CD4-positive, alpha-beta T cell (primary cell): ENCODE measurements at regions of chr1 and their contacts with region 1.

Region 1: GRCh38 chr1:178802873-178803272 is 68.0 kb downstream of the ANGPTL1 start:
- DNase-seq: no peak
- ATAC-seq: no peak
- H3K4me3 ChIP-seq: no peak overlapping the region
- H3K4me3 Mint-ChIP-seq: no peak overlapping the region
- H3K27ac ChIP-seq: no peak overlapping the region
- H3K27ac Mint-ChIP-seq: no peak overlapping the region
- H3K4me1 ChIP-seq: no peaks in the 10 kb centered on the region
- H3K4me1 Mint-ChIP-seq: no peaks in the 10 kb centered on the region
- H3K27me3 ChIP-seq: no peaks in the 10 kb centered on the region
- H3K27me3 Mint-ChIP-seq: no peaks in the 10 kb centered on the region
- CTCF ChIP-seq: no peak

Region 2: DNA sequence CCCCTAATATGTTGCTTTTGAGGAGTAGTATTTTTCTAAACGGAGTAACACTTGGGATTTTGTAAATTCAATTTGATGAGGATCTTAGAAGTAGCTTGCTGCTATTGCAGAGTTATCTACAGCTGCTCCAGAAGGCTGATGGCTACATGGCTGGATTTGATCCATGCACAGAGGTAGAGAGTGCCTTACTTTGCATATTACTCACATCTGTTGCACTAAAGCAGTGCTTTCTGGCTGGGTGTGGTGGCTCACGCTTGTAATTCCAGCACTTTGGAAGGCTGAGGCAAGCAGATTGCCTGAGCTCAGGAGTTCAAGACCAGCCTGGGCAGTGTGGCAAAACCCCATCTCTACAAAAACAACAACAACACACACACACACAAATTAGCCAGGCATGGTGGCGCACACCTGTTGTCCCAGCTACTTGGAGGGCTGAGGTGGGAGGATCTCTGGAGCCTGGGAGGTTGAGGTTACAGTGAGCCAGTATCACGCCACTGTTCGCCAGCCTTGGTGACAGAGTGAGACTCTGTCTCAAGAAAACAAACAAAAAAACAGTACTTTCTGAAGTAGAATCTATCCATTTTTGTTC is 53.2 kb before region 1 on chr1:
- CTCF ChIA-PET with region 1: no interaction called
- POLR2A ChIA-PET with region 1: no interaction called
- intact Hi-C with region 1: no loop called
- DNase-seq: no peak
- ATAC-seq: no peak
- H3K4me3 ChIP-seq: no peak overlapping the region
- H3K4me3 Mint-ChIP-seq: no peak overlapping the region
- H3K27ac ChIP-seq: no peak overlapping the region
- H3K27ac Mint-ChIP-seq: no peak overlapping the region
- H3K4me1 ChIP-seq: no peaks in the 10 kb centered on the region
- H3K4me1 Mint-ChIP-seq: peaks cover 4% of the 10 kb centered on the region
- H3K27me3 ChIP-seq: no peaks in the 10 kb centered on the region
- H3K27me3 Mint-ChIP-seq: no peaks in the 10 kb centered on the region
- CTCF ChIP-seq: no peak

Region 3: DNA sequence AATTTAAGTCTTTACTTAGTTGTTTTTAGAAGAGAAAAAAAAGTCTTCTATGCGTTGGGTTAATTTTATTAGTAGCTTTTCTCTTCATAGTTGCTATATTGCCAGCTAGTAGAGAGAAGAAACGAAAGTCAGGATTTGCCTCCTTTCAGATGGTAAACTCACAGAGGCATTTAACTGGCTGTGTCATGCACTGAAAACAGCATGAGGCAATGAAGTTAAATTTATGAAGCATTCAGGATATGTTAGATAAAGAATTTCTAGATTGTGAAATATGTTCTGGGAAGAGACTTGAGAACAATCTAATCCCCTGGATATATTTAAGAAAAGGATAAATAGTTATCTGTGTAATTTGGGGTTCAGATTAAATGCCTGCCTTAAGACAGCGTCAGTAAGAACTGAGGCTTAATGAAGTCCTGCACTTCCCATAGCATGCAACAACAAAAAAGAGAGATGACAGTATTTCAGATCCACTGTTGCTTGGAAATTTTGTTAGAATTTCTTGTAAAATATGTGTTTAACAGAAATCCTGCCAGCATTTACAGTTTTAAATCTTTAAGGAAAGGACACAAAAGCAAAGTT is 66.3 kb after region 1 on chr1:
- CTCF ChIA-PET with region 1: no interaction called
- POLR2A ChIA-PET with region 1: no interaction called
- intact Hi-C with region 1: loop called in 1 of 2 experiments (anchors 10 kb)
- DNase-seq: no peak
- ATAC-seq: no peak
- H3K4me3 ChIP-seq: no peak overlapping the region
- H3K4me3 Mint-ChIP-seq: no peak overlapping the region
- H3K27ac ChIP-seq: no peak overlapping the region
- H3K27ac Mint-ChIP-seq: no peak overlapping the region
- H3K4me1 ChIP-seq: no peaks in the 10 kb centered on the region
- H3K4me1 Mint-ChIP-seq: no peaks in the 10 kb centered on the region
- H3K27me3 ChIP-seq: no peaks in the 10 kb centered on the region
- H3K27me3 Mint-ChIP-seq: no peaks in the 10 kb centered on the region
- CTCF ChIP-seq: no peak